PC-3 (cell line): ENCODE measurements at regions of chr1 and their contacts with region 1.

Region 1: DNA sequence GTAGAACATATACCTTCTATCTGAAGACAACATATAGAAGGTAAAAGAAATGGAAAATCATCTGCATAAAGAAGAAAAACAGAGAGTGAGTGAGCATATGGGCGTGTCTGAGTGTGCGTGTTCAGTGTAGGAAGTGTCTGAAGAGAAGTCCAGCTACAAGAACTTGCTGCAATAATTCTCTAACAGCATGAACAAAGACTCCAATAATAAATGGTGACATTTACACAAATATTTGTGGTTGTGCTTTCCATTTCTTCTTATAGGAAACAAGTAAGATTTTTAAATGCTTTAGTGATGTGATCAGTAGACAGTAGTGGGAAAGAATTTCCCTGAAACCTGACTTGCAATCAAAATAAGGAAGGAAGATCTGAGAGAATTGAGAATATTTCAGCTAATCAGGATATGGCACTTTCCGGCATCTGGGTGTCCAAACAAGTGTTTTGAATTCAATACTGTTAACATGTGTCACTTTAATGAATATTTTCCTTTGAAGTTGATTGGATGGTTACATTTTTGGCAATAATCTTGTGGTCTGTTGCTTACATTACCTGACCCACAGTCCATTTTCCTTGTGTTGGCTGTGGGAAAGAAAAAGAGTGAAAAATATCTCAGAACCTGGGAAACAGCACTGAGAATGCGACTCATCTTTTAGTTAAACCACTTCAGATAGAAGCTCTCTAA is 154.0 kb downstream of the TGFB2 start:
- DNase-seq: peak; percentile 83
- ATAC-seq: peak; percentile 29
- H3K4me3 ChIP-seq: peak overlapping the region; percentile 51
- H3K27ac ChIP-seq: peak overlapping the region; percentile 74
- H3K4me1 ChIP-seq: peaks cover 47% of the 10 kb centered on the region
- H3K27me3 ChIP-seq: no peaks in the 10 kb centered on the region
- CTCF ChIP-seq: no peak

Region 2: DNA sequence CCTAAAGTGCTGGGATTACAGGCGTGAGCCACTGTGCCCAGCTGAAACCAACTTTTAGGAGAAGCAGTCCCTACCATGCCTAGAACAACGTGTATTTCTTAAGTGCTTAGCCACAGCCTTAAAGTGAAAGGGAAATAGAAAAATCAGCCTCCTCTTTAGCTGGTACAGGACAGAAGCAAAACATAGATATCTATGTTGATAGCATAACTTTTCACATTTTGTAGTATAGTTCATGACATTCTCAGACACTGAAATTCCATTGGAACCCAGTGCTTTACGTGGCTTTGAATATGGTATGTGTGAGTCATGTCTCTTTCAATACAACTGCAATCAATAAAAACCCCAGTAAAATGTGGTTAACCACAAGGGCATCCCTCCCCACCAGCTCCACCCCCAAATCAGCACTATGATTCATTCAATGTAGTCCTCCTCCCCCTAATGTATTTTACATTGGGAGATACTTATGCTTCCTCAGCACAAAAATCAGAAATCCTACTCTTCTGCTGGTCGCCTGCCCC is 121.9 kb before region 1 on chr1:
- CTCF ChIA-PET with region 1: no interaction called
- POLR2A ChIA-PET with region 1: interaction called, 4 read pairs
- intact Hi-C with region 1: loop called (anchors 1 kb)
- DNase-seq: peak; percentile 100
- ATAC-seq: peak; percentile 64
- H3K4me3 ChIP-seq: peak overlapping the region; percentile 57
- H3K27ac ChIP-seq: peak overlapping the region; percentile 91
- H3K4me1 ChIP-seq: peaks cover 90% of the 10 kb centered on the region
- H3K27me3 ChIP-seq: no peaks in the 10 kb centered on the region
- CTCF ChIP-seq: no peak

Region 3: GRCh38 chr1:218473522-218473921 is 25.6 kb before region 1 on chr1:
- CTCF ChIA-PET with region 1: interaction called, 3 read pairs
- POLR2A ChIA-PET with region 1: interaction called, 4 read pairs
- intact Hi-C with region 1: loop called (anchors 1 kb)
- DNase-seq: no peak
- ATAC-seq: no peak
- H3K4me3 ChIP-seq: no peak overlapping the region
- H3K27ac ChIP-seq: no peak overlapping the region
- H3K4me1 ChIP-seq: peaks cover 28% of the 10 kb centered on the region
- H3K27me3 ChIP-seq: no peaks in the 10 kb centered on the region
- CTCF ChIP-seq: no peak

Region 4: DNA sequence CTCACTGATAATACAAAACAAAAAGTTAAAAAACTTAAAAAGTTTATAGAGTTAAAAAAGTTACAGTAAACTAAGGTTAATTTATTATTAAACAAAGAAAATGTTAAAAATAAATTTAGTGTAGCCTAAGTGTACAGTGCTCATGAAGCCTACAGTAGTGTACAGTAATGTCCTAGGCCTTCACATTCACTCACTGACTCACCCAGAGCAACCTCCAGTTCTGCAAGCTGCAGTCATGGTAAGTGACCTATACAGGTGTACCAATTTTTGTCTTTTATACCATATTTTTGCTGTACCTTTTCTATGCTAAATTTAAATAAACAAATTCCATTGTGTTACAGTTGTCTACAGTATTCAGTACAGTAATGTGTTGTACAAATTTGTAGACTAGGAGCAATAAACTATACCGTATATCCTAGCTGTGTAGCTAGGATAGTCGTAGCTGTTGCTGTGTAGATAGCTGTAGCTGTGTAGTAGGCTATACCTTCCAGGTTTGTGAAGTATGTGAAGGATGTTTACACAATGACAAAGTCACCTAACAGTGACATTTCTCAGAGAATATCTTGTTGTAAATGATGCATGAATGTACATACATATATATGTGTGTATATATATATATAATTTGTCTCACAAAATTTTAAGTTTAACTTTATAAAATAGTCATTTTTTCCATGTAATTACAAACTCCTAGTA is 13.8 kb before region 1 on chr1:
- CTCF ChIA-PET with region 1: no interaction called
- POLR2A ChIA-PET with region 1: no interaction called
- intact Hi-C with region 1: loop called (anchors 1 kb)
- DNase-seq: peak; percentile 93
- ATAC-seq: peak; percentile 86
- H3K4me3 ChIP-seq: no peak overlapping the region
- H3K27ac ChIP-seq: peak overlapping the region; percentile 50
- H3K4me1 ChIP-seq: peaks cover 71% of the 10 kb centered on the region
- H3K27me3 ChIP-seq: no peaks in the 10 kb centered on the region
- CTCF ChIP-seq: no peak

Region 5: DNA sequence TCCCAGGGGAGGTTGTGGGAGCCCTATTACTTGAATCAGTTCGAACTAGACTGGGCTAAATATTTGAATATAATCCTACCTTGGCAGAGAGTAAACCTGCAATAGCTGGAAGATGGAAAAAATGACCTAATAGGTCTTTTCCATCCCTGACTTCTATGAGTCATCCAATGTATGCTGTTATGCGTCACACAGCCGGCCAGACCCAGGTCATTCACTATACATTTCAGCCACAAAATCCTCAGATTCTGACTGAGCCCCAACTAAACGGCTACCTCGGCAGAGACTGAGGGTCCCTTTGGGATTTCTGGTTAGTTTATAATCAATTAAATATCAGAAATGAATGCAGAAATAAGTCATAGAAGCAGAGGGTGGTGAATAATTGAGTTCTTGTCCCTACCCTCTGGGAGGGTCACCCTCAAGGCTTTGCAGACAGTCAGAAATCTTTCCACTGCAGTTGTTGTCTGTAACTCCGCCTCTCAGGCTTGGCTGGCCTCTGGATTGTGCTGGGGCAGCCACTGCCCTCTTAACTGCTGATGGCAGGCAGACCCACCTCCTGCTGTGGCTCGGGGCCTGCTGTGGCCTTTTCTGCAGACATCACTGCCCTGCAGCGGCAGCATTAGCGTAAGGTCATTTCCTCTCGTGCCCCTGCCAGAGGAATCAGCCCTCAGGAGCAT is 86.5 kb after region 1 on chr1:
- CTCF ChIA-PET with region 1: no interaction called
- POLR2A ChIA-PET with region 1: no interaction called
- intact Hi-C with region 1: loop called (anchors 2 kb)
- DNase-seq: peak; percentile 99
- ATAC-seq: peak; percentile 87
- H3K4me3 ChIP-seq: peak overlapping the region; percentile 28; the same call in 1 of the 2 replicates
- H3K27ac ChIP-seq: peak overlapping the region; percentile 92
- H3K4me1 ChIP-seq: peaks cover 34% of the 10 kb centered on the region
- H3K27me3 ChIP-seq: no peaks in the 10 kb centered on the region
- CTCF ChIP-seq: no peak

Region 6: GRCh38 chr1:218804014-218804785 is 305.0 kb after region 1 on chr1:
- CTCF ChIA-PET with region 1: no interaction called
- POLR2A ChIA-PET with region 1: no interaction called
- intact Hi-C with region 1: loop called (anchors 5 kb)
- DNase-seq: peak; percentile 93
- ATAC-seq: peak; percentile 92
- H3K4me3 ChIP-seq: no peak overlapping the region
- H3K27ac ChIP-seq: peak overlapping the region; percentile 77
- H3K4me1 ChIP-seq: peaks cover 31% of the 10 kb centered on the region
- H3K27me3 ChIP-seq: no peaks in the 10 kb centered on the region
- CTCF ChIP-seq: no peak